ENCODE measurements at regions of chr15 and their contacts with region 1.

Region 1: GRCh38 chr15:61871926-61872522 is 188.2 kb downstream of the VPS13C start:
- DNase-seq: peak; percentile 9 to 15 (median 12)
- ATAC-seq: peak; percentile 72
- H3K4me3 ChIP-seq: no peak overlapping the region
- H3K27ac ChIP-seq: no peak overlapping the region
- H3K4me1 ChIP-seq: no peaks in the 10 kb centered on the region
- H3K27me3 ChIP-seq: no peaks in the 10 kb centered on the region
- CTCF ChIP-seq: peak; percentile 32 to 67 (median 43); a peak in 4 of 6 replicates
- EP300 ChIP-seq: no peak
- POLR2A ChIP-seq: no peak
- RAD21 ChIP-seq: peak; percentile 50 to 71

Region 2: GRCh38 chr15:61479613-61480012 is 392.4 kb before region 1 on chr15:
- CTCF ChIA-PET with region 1: no interaction called
- POLR2A ChIA-PET with region 1: no interaction called
- in situ Hi-C with region 1: no loop called
- intact Hi-C with region 1: no loop called
- DNase-seq: no peak
- ATAC-seq: no peak
- H3K4me3 ChIP-seq: no peak overlapping the region
- H3K27ac ChIP-seq: no peak overlapping the region
- H3K4me1 ChIP-seq: no peaks in the 10 kb centered on the region
- H3K27me3 ChIP-seq: peaks cover 0 to 5% of the 10 kb centered on the region in 2 experiments; a peak in 1 of 5 replicates
- CTCF ChIP-seq: no peak
- EP300 ChIP-seq: no peak
- POLR2A ChIP-seq: no peak
- RAD21 ChIP-seq: no peak

Region 3: DNA sequence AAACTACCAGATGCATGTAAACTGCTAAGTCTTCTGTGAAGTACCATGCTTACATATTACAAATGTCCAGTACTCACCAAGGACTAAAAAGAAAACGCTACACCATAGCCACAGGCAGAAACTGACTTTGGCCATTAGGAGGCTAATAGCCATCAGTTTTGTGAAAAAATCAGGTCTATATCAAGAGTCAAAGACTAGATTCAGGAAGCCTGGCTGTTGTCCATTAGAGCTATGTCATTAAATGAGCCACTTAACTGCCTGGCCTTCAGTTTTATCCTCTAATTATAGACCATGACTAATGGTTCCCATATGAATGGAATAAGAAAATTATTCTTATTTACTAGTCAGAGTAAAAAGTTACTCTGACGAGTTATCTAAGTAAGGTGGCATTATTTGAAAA is 44.1 kb after region 1 on chr15:
- CTCF ChIA-PET with region 1: no interaction called
- POLR2A ChIA-PET with region 1: no interaction called
- in situ Hi-C with region 1: no loop called
- intact Hi-C with region 1: no loop called
- DNase-seq: no peak
- ATAC-seq: no peak
- H3K4me3 ChIP-seq: no peak overlapping the region
- H3K27ac ChIP-seq: no peak overlapping the region
- H3K4me1 ChIP-seq: no peaks in the 10 kb centered on the region
- H3K27me3 ChIP-seq: no peaks in the 10 kb centered on the region
- CTCF ChIP-seq: no peak
- EP300 ChIP-seq: no peak
- POLR2A ChIP-seq: no peak
- RAD21 ChIP-seq: no peak

Region 4: DNA sequence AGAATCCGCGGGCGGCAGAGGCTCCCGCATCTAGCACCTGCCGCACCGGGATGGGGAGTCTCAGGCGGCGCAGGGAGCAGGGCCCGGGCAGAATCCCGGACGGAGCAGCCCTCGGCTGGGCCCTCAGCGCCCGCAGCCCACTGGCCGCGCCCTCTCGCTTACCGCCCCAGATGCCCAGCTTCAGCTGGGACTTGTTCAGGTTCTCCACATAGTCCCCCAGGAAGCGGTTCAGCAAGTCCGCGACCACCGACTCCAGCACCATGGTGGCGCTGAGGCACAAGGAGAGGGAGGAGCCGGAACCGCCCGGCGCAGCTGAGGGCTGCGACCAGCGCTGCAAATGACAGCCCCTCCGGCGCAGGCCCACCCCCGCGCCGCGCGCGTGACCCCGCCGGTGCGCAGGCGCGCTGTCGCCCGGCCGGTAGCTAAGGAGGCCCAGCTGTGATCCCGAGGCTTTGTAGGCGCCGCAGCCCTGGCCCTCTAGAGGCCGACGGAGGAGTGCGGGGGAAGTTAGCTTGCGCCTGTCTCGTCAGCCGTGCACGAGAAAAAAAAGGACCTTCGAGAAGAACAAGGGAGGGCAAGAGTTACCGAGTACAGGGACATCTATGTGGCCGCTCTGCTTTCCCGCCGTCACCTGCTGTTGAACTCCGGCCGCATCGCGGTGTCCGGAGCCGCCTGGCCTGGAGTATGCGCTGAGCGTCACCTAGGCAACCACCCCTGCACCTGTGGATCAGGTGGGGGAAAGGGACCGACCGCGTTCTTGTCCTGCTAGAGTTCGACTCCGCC is 188.3 kb after region 1 on chr15 and contains the start of gene VPS13C:
- CTCF ChIA-PET with region 1: no interaction called
- POLR2A ChIA-PET with region 1: interaction called, 4 read pairs
- in situ Hi-C with region 1: loop called (anchors 10 kb)
- intact Hi-C with region 1: no loop called
- DNase-seq: peak; percentile 92 to 96 (median 95)
- ATAC-seq: peak; percentile 97
- H3K4me3 ChIP-seq: peak within 1 kb of the TSS; percentile 86
- H3K27ac ChIP-seq: peak within 1 kb of the TSS; percentile 77
- H3K4me1 ChIP-seq: peaks cover 3 to 13% of the 10 kb centered on the region in 2 experiments; a peak in 3 of 5 replicates
- H3K27me3 ChIP-seq: no peaks in the 10 kb centered on the region; a peak in 1 of 5 replicates
- CTCF ChIP-seq: peak; percentile 78 to 87 (median 79)
- EP300 ChIP-seq: no peak
- POLR2A ChIP-seq: peak; percentile 82
- RAD21 ChIP-seq: peak; percentile 42 to 57
- polyA plus RNA-seq, gene VPS13C: 5.2 to 8.0 TPM

Region 5: GRCh38 chr15:62071711-62072308 is 199.8 kb after region 1 on chr15:
- CTCF ChIA-PET with region 1: interaction called, 10 read pairs
- POLR2A ChIA-PET with region 1: no interaction called
- in situ Hi-C with region 1: loop called (anchors 10 kb)
- intact Hi-C with region 1: loop called (anchors 1 kb)
- DNase-seq: peak; percentile 23 to 46 (median 30)
- ATAC-seq: no peak
- H3K4me3 ChIP-seq: no peak overlapping the region
- H3K27ac ChIP-seq: no peak overlapping the region
- H3K4me1 ChIP-seq: peaks cover 2 to 9% of the 10 kb centered on the region in 2 experiments; a peak in 4 of 5 replicates
- H3K27me3 ChIP-seq: peaks cover 4 to 10% of the 10 kb centered on the region in 2 experiments; a peak in 3 of 5 replicates
- CTCF ChIP-seq: peak; percentile 46 to 62 (median 46); a peak in 5 of 6 replicates
- EP300 ChIP-seq: no peak
- POLR2A ChIP-seq: no peak
- RAD21 ChIP-seq: peak; percentile 47 to 72

Region 6: DNA sequence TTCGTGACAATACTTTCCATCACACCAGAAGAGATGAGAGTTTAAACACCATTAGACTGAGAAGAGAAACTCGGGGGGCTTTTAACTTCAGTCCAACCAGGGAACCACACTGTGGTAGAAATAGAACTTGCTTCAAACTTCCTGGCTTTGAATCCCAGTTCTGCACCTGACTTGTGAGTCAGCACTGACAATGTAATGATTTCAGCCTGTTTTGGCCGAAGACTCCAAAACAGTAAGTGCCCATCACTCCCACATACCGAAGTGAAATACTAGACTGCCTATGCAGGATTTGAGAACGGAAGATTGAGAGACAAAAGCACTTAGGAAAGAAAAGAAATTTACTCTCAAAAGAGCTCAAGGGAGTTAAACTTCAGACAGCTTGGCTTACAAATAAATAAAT is 266.1 kb after region 1 on chr15:
- CTCF ChIA-PET with region 1: no interaction called
- POLR2A ChIA-PET with region 1: no interaction called
- in situ Hi-C with region 1: no loop called
- intact Hi-C with region 1: no loop called
- DNase-seq: no peak
- ATAC-seq: no peak
- H3K4me3 ChIP-seq: no peak overlapping the region
- H3K27ac ChIP-seq: no peak overlapping the region
- H3K4me1 ChIP-seq: no peaks in the 10 kb centered on the region; a peak in 2 of 5 replicates
- H3K27me3 ChIP-seq: peaks cover 2 to 3% of the 10 kb centered on the region in 2 experiments; a peak in 1 of 5 replicates
- CTCF ChIP-seq: no peak
- EP300 ChIP-seq: no peak
- POLR2A ChIP-seq: no peak
- RAD21 ChIP-seq: no peak

Region 7: DNA sequence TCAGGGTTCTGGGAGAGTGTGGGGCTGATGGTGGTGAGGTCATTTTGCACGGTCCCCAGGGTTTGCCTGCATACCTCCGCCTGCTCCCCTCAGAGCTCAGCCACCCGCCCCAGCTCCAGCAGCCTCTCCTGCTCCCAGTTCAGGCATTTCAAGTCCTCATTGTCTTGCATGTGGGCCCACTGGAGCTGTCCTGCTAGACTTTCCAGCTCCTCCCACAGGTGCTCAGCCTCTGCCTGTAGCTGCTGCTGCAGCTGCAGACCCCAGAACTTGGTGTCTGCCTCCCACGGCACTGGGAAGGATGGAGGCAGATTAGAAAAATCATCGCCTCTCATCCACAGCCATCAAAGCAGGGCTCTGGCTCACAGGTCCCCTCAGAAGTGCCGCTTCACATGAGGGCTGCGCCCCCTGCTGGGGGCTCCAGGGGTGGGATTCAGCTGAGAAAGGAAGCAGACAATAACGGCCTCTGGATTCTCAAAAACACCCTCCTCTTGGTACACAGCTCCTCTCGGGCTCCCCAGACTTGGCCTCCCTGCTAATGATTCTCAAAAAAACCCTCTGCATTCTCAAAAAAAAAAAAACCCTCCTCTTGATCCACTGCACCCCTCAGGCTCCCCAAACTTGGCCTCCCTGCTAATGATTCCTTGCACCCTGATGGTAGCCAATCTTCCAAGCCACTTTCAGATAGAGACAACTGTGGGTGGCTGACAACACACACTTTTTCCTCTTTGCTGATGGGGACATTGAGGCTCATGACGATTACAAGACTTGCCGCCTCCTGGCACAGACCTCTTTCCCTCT is 382.3 kb after region 1 on chr15:
- CTCF ChIA-PET with region 1: interaction called, 4 read pairs
- POLR2A ChIA-PET with region 1: no interaction called
- in situ Hi-C with region 1: loop called (anchors 5 kb)
- intact Hi-C with region 1: loop called (anchors 5 kb)
- DNase-seq: peak; percentile 63 to 71 (median 68)
- ATAC-seq: peak; percentile 95
- H3K4me3 ChIP-seq: no peak overlapping the region
- H3K27ac ChIP-seq: no peak overlapping the region
- H3K4me1 ChIP-seq: no peaks in the 10 kb centered on the region
- H3K27me3 ChIP-seq: peaks cover 0 to 22% of the 10 kb centered on the region in 2 experiments; a peak in 2 of 5 replicates
- CTCF ChIP-seq: peak; percentile 74 to 86 (median 81)
- EP300 ChIP-seq: no peak
- POLR2A ChIP-seq: no peak
- RAD21 ChIP-seq: peak; percentile 55 to 70

Measured in K562 (cell line).